Dorsolateral prefrontal cortex (tissue), 120 donors: ENCODE measurements at regions of chr9 and their contacts with region 1.

Region 1: GRCh38 chr9:98796364-98797101 is at the start of gene ANKS6:
- DNase-seq: peak; percentile 60 to 91 (median 76)
- H3K4me3 ChIP-seq: peak within 1 kb of the TSS; percentile 49 to 88 (median 78)
- H3K27ac ChIP-seq: peak within 1 kb of the TSS; percentile 56 to 97 (median 90)
- H3K27me3 ChIP-seq: no peaks in the 10 kb centered on the region
- CTCF ChIP-seq: peak in 53 of 56 donors; percentile 22 to 75 (median 49)
- total RNA-seq, gene ANKS6: 21.8 to 47.3 (median 33.7) TPM

Region 2: DNA sequence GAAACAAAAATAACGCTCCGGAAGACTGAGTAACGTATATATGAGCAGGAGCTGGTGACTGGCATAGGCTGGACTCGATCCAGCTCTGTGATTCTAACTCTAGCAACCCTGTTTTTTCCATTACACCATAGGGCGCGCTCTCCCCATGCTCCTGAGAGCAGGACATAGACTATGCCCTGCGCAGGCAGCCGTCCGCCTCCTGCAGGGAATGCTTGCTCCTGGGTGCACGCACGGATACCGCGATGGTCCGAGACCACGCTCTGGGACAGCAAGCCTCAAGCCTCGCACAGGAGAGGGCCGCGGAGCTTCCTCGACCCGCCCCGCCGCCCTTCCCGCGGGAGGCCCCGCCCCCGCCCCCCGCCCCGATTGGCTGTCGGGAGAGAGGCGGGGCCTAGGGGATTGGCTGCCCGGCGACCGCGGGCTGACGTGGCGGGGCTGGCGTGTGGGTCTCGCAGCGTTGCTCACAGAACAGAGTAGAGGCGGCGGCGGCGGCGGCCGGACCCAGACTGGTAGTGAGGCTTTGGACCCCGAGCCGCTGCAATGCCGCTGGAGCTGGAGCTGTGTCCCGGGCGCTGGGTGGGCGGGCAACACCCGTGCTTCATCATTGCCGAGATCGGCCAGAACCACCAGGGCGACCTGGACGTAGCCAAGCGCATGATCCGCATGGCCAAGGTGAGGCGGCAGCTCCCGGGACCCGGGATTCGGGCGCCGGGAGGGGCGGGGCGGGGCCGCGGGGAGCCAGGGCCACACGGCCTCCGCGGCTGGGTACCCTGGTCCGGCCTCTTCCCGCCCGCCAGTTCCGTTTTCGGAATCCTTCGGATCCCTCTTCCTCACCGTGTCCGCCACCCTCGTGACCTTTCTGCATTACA is 740.0 kb before region 1 on chr9 and contains the start of gene NANS:
- intact Hi-C with region 1: loop called in 1 of 2 experiments (anchors 10 kb)
- DNase-seq: peak; percentile 86 to 96 (median 93)
- H3K4me3 ChIP-seq: peak within 1 kb of the TSS; percentile 69 to 99 (median 91)
- H3K27ac ChIP-seq: peak within 1 kb of the TSS in 57 of 59 donors; percentile 52 to 93 (median 85)
- H3K27me3 ChIP-seq: no peaks in the 10 kb centered on the region
- CTCF ChIP-seq: peak in 19 of 56 donors; percentile 4 to 53 (median 33)
- total RNA-seq, gene NANS: 13.8 to 40.0 (median 23.9) TPM

Region 3: GRCh38 chr9:98568909-98569469 is 227.5 kb before region 1 on chr9:
- intact Hi-C with region 1: no loop called
- DNase-seq: no peak
- H3K4me3 ChIP-seq: no peak overlapping the region
- H3K27ac ChIP-seq: peak overlapping the region in 40 of 59 donors; percentile 0 to 89 (median 60)
- H3K27me3 ChIP-seq: peaks cover 0 to 6% (median 0%) of the 10 kb centered on the region in 45 donors
- CTCF ChIP-seq: no peak

Region 4: GRCh38 chr9:99104459-99105151 is 308.1 kb after region 1 on chr9 and contains the start of gene TGFBR1:
- intact Hi-C with region 1: loop called in 1 of 2 experiments (anchors 10 kb)
- DNase-seq: peak; percentile 87 to 98 (median 91)
- H3K4me3 ChIP-seq: peak within 1 kb of the TSS; percentile 54 to 88 (median 79)
- H3K27ac ChIP-seq: peak within 1 kb of the TSS in 55 of 59 donors; percentile 29 to 90 (median 77)
- H3K27me3 ChIP-seq: no peaks in the 10 kb centered on the region
- CTCF ChIP-seq: peak in 24 of 56 donors; percentile 8 to 52 (median 22)
- total RNA-seq, gene TGFBR1: 9.7 to 58.1 (median 21.3) TPM